Activated CD8-positive, alpha-beta T cell treated with anti-CD3 and anti-CD28 coated beads for 36 hours (primary cell): ENCODE measurements at regions of chr2 and their contacts with region 1.

Region 1: GRCh38 chr2:105797298-105797819 is 52.6 kb downstream of the NCK2 start:
- DNase-seq: peak; percentile 67
- ATAC-seq: peak; percentile 42
- H3K4me3 Mint-ChIP-seq: peak overlapping the region; percentile 66
- H3K27ac Mint-ChIP-seq: peak overlapping the region; percentile 93
- H3K4me1 Mint-ChIP-seq: peaks cover 90% of the 10 kb centered on the region
- H3K27me3 Mint-ChIP-seq: no peaks in the 10 kb centered on the region
- CTCF ChIP-seq: no peak

Region 2: GRCh38 chr2:105396254-105397024 is 400.9 kb before region 1 on chr2:
- CTCF ChIA-PET with region 1: no interaction called
- POLR2A ChIA-PET with region 1: no interaction called
- intact Hi-C with region 1: no loop called
- DNase-seq: peak; percentile 76
- ATAC-seq: peak; percentile 76
- H3K4me3 Mint-ChIP-seq: no peak overlapping the region
- H3K27ac Mint-ChIP-seq: no peak overlapping the region
- H3K4me1 Mint-ChIP-seq: peaks cover 10% of the 10 kb centered on the region
- H3K27me3 Mint-ChIP-seq: peaks cover 14% of the 10 kb centered on the region
- CTCF ChIP-seq: no peak

Region 3: GRCh38 chr2:105610576-105611332 is 186.6 kb before region 1 on chr2:
- CTCF ChIA-PET with region 1: no interaction called
- POLR2A ChIA-PET with region 1: no interaction called
- intact Hi-C with region 1: no loop called
- DNase-seq: no peak
- ATAC-seq: no peak
- H3K4me3 Mint-ChIP-seq: no peak overlapping the region
- H3K27ac Mint-ChIP-seq: no peak overlapping the region
- H3K4me1 Mint-ChIP-seq: no peaks in the 10 kb centered on the region
- H3K27me3 Mint-ChIP-seq: no peaks in the 10 kb centered on the region
- CTCF ChIP-seq: no peak

Region 4: DNA sequence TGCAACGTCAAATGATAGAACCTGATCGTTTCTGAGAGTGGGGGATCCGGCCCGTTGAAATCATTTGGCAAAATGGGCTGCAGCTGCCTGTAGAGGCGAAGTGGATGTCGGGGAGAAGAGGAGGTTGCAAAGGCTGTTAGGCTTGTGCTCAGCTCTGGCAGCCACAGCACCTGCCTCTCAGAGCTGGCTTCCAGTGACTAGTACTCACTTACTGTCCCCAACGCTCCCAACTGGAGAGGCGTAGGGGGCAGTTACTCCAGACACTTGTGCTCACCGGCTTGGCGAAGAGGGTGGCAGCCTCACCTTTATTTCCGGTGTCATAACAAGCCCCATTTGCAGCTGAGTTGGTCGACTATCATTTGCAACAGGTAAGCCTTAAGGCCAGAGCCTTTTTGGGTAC is 14.7 kb before region 1 on chr2:
- CTCF ChIA-PET with region 1: interaction called, 4 read pairs
- POLR2A ChIA-PET with region 1: interaction called, 11 read pairs
- intact Hi-C with region 1: no loop called
- DNase-seq: no peak
- ATAC-seq: no peak
- H3K4me3 Mint-ChIP-seq: peak overlapping the region; percentile 60
- H3K27ac Mint-ChIP-seq: peak overlapping the region; percentile 87
- H3K4me1 Mint-ChIP-seq: peaks cover 90% of the 10 kb centered on the region
- H3K27me3 Mint-ChIP-seq: no peaks in the 10 kb centered on the region
- CTCF ChIP-seq: no peak

Region 5: GRCh38 chr2:105834931-105835330 is 37.6 kb after region 1 on chr2:
- CTCF ChIA-PET with region 1: no interaction called
- POLR2A ChIA-PET with region 1: interaction called, 12 read pairs
- intact Hi-C with region 1: loop called (anchors 5 kb)
- DNase-seq: no peak
- ATAC-seq: no peak
- H3K4me3 Mint-ChIP-seq: no peak overlapping the region
- H3K27ac Mint-ChIP-seq: peak overlapping the region; percentile 76
- H3K4me1 Mint-ChIP-seq: peaks cover 93% of the 10 kb centered on the region
- H3K27me3 Mint-ChIP-seq: no peaks in the 10 kb centered on the region
- CTCF ChIP-seq: no peak

Region 6: GRCh38 chr2:105858868-105859693 is 61.7 kb after region 1 on chr2:
- CTCF ChIA-PET with region 1: interaction called, 9 read pairs
- POLR2A ChIA-PET with region 1: interaction called, 8 read pairs
- intact Hi-C with region 1: loop called (anchors 5 kb)
- DNase-seq: peak; percentile 62
- ATAC-seq: peak; percentile 64
- H3K4me3 Mint-ChIP-seq: peak overlapping the region; percentile 27
- H3K27ac Mint-ChIP-seq: peak overlapping the region; percentile 92
- H3K4me1 Mint-ChIP-seq: peaks cover 93% of the 10 kb centered on the region
- H3K27me3 Mint-ChIP-seq: no peaks in the 10 kb centered on the region
- CTCF ChIP-seq: no peak

Region 7: DNA sequence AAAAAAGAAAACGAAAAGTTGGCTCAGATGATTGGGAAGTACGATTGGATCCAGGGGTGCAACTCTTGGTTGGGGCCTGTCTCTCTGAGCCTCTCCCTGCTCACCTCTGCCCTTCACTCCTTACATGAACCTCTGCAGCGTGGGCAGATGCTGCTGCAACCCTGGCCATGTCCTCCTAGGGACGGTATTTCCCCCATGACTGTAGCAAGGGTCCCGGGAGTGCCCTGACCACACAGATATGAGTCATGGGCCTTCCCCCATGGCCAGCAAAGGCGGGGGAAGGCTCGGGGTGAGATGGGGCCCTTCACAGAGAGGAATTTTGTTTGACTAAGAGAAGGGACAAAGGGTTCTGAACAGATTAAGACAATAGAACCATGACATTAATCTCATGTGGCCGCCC is 76.4 kb after region 1 on chr2:
- CTCF ChIA-PET with region 1: no interaction called
- POLR2A ChIA-PET with region 1: interaction called, 4 read pairs
- intact Hi-C with region 1: loop called (anchors 5 kb)
- DNase-seq: peak; percentile 92
- ATAC-seq: peak; percentile 90
- H3K4me3 Mint-ChIP-seq: peak overlapping the region; percentile 2
- H3K27ac Mint-ChIP-seq: peak overlapping the region; percentile 84
- H3K4me1 Mint-ChIP-seq: peaks cover 92% of the 10 kb centered on the region
- H3K27me3 Mint-ChIP-seq: no peaks in the 10 kb centered on the region
- CTCF ChIP-seq: no peak

Region 8: GRCh38 chr2:105929516-105929915 is 132.2 kb after region 1 on chr2:
- CTCF ChIA-PET with region 1: no interaction called
- POLR2A ChIA-PET with region 1: interaction called, 3 read pairs
- intact Hi-C with region 1: loop called (anchors 5 kb)
- DNase-seq: peak; percentile 78
- ATAC-seq: peak; percentile 69
- H3K4me3 Mint-ChIP-seq: no peak overlapping the region
- H3K27ac Mint-ChIP-seq: peak overlapping the region; percentile 83
- H3K4me1 Mint-ChIP-seq: peaks cover 62% of the 10 kb centered on the region
- H3K27me3 Mint-ChIP-seq: no peaks in the 10 kb centered on the region
- CTCF ChIP-seq: no peak